ENCODE measurements at regions of chr16 and their contacts with region 1.

Region 1: GRCh38 chr16:67260426-67261075 is 11.8 kb downstream of the SLC9A5 start:
- DNase-seq: peak; percentile 69 to 85
- ATAC-seq: peak; percentile 100
- H3K4me3 ChIP-seq: no peak overlapping the region
- H3K27ac ChIP-seq: peak overlapping the region; percentile 64 to 83 (median 74)
- H3K4me1 ChIP-seq: peaks cover 10 to 13% of the 10 kb centered on the region in 2 donors
- H3K27me3 ChIP-seq: no peaks in the 10 kb centered on the region
- CTCF ChIP-seq: peak; percentile 52 to 67 (median 54)
- POLR2A ChIP-seq: no peak

Region 2: GRCh38 chr16:67284699-67285646 is 24.4 kb after region 1 on chr16:
- in situ Hi-C with region 1: no loop called
- intact Hi-C with region 1: loop called (anchors 1 kb)
- DNase-seq: peak; percentile 27 to 54
- ATAC-seq: peak; percentile 79 to 84
- H3K4me3 ChIP-seq: no peak overlapping the region
- H3K27ac ChIP-seq: no peak overlapping the region
- H3K4me1 ChIP-seq: no peaks in the 10 kb centered on the region
- H3K27me3 ChIP-seq: no peaks in the 10 kb centered on the region
- CTCF ChIP-seq: peak; percentile 29 to 71 (median 65)
- POLR2A ChIP-seq: no peak

Region 3: GRCh38 chr16:67336648-67337047 is 76.1 kb after region 1 on chr16:
- in situ Hi-C with region 1: no loop called
- intact Hi-C with region 1: no loop called
- DNase-seq: no peak
- ATAC-seq: no peak
- H3K4me3 ChIP-seq: no peak overlapping the region
- H3K27ac ChIP-seq: no peak overlapping the region
- H3K4me1 ChIP-seq: no peaks in the 10 kb centered on the region
- H3K27me3 ChIP-seq: no peaks in the 10 kb centered on the region
- CTCF ChIP-seq: no peak
- POLR2A ChIP-seq: no peak

Region 4: GRCh38 chr16:67406111-67406890 is 145.8 kb after region 1 on chr16:
- in situ Hi-C with region 1: loop called in 1 of 4 experiments (anchors 10 kb)
- intact Hi-C with region 1: loop called (anchors 5 kb)
- DNase-seq: peak in 1 of 2 donors; percentile 63
- ATAC-seq: peak; percentile 92 to 97
- H3K4me3 ChIP-seq: no peak overlapping the region
- H3K27ac ChIP-seq: peak overlapping the region; percentile 71 to 85 (median 82)
- H3K4me1 ChIP-seq: peaks cover 33 to 48% of the 10 kb centered on the region in 2 donors
- H3K27me3 ChIP-seq: no peaks in the 10 kb centered on the region
- CTCF ChIP-seq: no peak
- POLR2A ChIP-seq: no peak